Activated naive CD8-positive, alpha-beta T cell treated with anti-CD3 and anti-CD28 coated beads, Interleukin-2, amount 10 ng/mL, durations not matched to agents 7 days and 5 days (primary cell): ENCODE measurements at regions of chr5 and their contacts with region 1.

Region 1: GRCh38 chr5:133051580-133052332 is at the start of gene HSPA4:
- DNase-seq: peak; percentile 94
- ATAC-seq: peak; percentile 79
- H3K4me3 Mint-ChIP-seq: peak within 1 kb of the TSS; percentile 98
- H3K27ac Mint-ChIP-seq: peak within 1 kb of the TSS; percentile 100
- H3K4me1 Mint-ChIP-seq: peaks cover 36% of the 10 kb centered on the region
- H3K27me3 Mint-ChIP-seq: no peaks in the 10 kb centered on the region
- total RNA-seq, gene HSPA4: 78.9 to 83.2 TPM

Region 2: DNA sequence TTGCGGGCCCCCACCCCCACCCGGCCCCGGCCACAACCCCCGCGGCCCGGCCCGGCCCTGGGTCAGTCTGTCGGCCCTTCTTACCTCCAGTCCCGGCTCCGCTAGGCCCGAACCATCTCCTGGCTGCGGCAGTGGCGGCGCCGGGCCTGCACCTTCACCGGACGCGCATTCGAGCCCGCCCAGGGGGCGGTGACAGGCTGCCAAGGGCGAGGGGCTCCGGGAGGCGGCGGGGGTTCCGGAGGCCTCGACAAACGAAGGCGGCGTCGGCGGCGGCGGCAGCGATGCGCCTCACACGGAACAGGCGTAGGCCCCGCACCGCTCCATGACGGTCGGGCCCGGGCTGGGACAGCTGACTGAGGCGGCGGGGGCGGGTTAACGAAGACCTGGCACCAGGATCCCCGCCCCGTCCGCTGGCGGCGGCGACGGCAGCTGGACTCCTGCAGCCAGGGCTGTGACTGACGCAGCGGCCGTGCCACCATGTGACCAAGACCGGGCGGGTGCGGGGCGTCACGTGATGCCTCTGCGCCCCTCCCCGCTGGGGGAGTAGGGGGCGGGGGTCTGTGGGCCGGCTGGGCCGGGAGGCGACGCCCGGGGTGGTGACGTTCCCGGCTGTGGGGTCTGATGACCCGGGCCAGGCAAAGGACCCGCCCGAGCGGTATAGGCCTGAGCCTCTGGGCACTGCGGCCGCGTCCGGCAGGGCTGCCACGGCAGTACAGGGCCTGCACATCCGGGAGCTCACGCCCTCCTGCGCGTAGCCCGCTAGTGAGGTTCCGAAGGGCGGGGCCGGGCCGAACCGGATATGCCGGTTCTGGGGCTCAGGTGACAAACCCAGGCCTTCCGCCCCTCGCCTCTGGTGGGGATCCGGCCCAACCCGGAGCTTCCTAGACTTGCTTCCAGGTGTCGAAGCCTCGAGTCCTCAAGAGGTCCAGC is 88.3 kb before region 1 on chr5 and contains the start of gene AFF4:
- POLR2A ChIA-PET with region 1: interaction called, 33 read pairs
- DNase-seq: peak; percentile 90
- ATAC-seq: peak; percentile 91
- H3K4me3 Mint-ChIP-seq: peak within 1 kb of the TSS; percentile 97
- H3K27ac Mint-ChIP-seq: peak within 1 kb of the TSS; percentile 96
- H3K4me1 Mint-ChIP-seq: peaks cover 22% of the 10 kb centered on the region
- H3K27me3 Mint-ChIP-seq: no peaks in the 10 kb centered on the region
- total RNA-seq, gene AFF4: 40.3 to 42.1 TPM

Region 3: DNA sequence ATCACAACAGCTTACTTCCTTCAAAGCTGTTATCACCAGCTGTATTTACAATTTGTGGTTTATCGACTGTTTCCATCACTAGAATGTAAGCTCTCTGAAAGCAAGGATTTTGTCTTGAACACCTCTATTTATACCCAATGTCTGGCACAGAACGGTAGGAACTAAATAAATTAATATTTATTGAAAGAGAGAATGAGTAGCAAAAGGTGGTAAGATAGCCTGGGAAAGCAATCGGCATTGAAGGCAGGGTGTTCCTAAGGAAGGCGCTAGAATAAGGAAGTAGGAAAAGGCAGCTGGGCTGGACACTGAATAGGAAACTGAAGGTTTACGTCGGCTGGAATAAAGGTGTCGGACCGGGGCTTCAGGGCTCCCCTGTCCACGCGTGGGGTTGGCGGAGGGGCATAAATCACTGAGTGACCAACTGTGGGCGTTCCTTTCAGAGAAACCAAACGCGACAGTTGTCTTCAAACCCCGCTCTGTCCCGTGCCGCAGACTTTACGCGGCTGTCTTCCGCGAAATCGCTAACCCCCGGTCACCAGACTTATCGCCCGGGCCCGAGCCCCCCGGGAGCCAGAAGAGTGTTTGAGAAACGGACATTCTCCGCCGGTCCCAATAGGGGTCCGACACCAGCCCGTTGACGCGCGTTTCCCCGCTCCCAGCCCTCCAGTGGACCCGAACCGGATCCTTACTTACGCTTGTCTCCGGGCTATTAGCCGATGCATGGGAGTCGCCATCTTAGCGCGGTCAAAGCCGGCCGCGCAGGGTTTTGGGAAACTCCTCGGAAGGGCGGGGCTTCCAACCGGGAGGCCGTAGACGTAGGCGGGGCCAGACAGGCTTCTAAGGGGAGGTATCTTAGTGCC is 25.7 kb before region 1 on chr5 and contains the start of gene ZCCHC10:
- POLR2A ChIA-PET with region 1: interaction called, 20 read pairs
- DNase-seq: peak; percentile 90
- ATAC-seq: peak; percentile 99
- H3K4me3 Mint-ChIP-seq: peak within 1 kb of the TSS; percentile 90
- H3K27ac Mint-ChIP-seq: peak within 1 kb of the TSS; percentile 88
- H3K4me1 Mint-ChIP-seq: peaks cover 14% of the 10 kb centered on the region
- H3K27me3 Mint-ChIP-seq: no peaks in the 10 kb centered on the region
- total RNA-seq, gene ZCCHC10: 22.8 to 24.5 TPM